ENCODE measurements at regions of chr6 and their contacts with region 1.

Region 1: DNA sequence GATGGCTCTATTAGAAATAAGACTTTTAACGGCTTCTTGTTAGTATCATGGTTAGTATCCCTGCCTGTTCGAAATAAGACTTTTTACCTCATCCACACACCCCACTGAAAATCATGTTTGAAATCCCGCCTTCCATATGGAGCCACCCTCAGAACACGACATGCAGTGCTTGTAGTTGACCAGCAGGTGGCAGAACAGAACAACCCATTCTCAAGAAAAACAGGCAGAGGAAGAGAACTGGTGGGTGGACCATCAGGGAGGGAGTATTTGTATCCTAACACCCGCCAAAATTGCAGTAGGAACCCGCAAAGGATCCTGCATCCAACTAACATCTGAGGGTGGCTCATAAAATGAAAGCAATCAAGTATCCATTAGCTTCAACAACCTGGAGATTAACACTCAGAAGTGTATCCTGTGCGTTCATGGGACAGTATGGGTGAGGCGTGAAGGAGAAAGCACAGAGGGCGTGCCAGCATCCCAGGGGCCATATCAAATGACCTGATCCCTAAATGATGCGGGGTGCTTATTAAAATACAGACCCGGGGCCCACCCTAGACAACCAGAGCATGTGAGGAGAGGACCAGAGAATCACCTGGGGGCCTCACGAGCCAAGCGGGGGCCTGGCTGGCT is 89.6 kb upstream of the NHSL1 start:
- DNase-seq: peak; percentile 69 to 71
- ATAC-seq: peak; percentile 45 to 68; a peak in 5 of 6 replicates
- H3K4me3 ChIP-seq: no peak overlapping the region
- H3K27ac ChIP-seq: 0 out of 6 replicates have a peak overlapping the region, but pooled peaks of 1 of the 2 experiments have one; percentile 12
- H3K4me1 ChIP-seq: peaks cover 18% of the 10 kb centered on the region
- CTCF ChIP-seq: peak; percentile 80
- EP300 ChIP-seq: no peak
- POLR2A ChIP-seq: no peak
- RAD21 ChIP-seq: peak; percentile 78

Region 2: DNA sequence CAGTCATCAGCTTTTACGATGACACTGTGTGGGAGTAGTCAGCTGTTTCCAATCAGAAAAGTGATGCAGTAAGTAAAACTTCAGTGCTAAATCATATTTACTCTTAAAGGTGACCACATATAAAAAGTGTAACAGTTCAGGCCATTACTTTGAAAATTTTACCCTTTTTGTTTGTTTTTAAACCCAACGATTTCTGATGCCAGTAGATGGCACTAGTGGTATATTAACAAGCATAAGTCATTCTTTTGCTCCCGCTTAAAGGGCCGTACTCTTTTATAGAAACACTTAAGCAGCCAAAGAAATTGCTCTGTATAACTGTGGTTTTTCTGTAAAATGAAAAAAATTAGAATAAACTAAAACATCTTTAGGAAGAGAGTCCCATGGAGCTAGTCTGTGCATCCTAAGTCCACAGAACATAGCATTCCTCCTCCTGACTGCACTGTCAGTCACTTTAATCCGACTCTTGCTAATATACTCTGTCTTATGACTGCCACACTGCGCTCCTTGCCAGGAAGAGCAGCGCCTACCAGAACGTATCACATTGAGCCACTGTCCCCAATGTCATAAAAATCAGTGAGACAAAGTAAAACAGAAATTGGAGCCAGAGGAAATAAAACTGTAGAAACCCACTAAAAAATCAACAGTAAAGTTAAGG is 159.8 kb before region 1 on chr6:
- CTCF ChIA-PET with region 1: interaction called, 19 read pairs
- POLR2A ChIA-PET with region 1: no interaction called
- DNase-seq: peak; percentile 25 to 54
- ATAC-seq: peak; percentile 73 to 78; a peak in 4 of 6 replicates
- H3K4me3 ChIP-seq: no peak overlapping the region
- H3K27ac ChIP-seq: peak overlapping the region; percentile 2 to 3; a peak in 1 of 6 replicates
- H3K4me1 ChIP-seq: no peaks in the 10 kb centered on the region
- CTCF ChIP-seq: peak; percentile 73
- EP300 ChIP-seq: no peak
- POLR2A ChIP-seq: no peak
- RAD21 ChIP-seq: peak; percentile 79 to 86

Region 3: GRCh38 chr6:138473144-138473543 is 115.8 kb before region 1 on chr6:
- CTCF ChIA-PET with region 1: no interaction called
- POLR2A ChIA-PET with region 1: no interaction called
- DNase-seq: no peak
- ATAC-seq: no peak
- H3K4me3 ChIP-seq: no peak overlapping the region
- H3K27ac ChIP-seq: no peak overlapping the region
- H3K4me1 ChIP-seq: peaks cover 14% of the 10 kb centered on the region
- CTCF ChIP-seq: no peak
- EP300 ChIP-seq: no peak
- POLR2A ChIP-seq: no peak
- RAD21 ChIP-seq: no peak

Region 4: DNA sequence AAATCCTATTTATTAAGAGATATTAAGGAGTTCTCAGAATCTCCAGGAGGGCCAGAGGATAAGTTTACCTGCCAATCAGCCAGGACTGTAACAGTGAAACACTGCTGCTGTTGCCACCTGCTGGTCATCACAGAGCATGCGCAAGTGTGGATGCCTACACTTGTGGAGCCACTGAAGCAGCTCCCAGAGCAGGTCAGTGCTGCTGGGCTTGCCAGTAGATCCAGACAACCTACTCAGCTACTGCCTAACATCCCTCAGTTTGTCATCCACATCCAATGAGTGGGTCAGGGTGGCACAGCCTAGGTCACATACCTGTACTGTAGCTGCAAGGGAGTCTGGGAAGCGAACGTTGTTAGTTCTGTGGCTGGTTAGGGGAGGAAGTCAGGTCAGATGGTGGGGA is 71.3 kb before region 1 on chr6:
- CTCF ChIA-PET with region 1: no interaction called
- POLR2A ChIA-PET with region 1: no interaction called
- DNase-seq: peak in 1 of 2 experiments; percentile 28
- ATAC-seq: peak in 1 of 2 experiments; percentile 62; a peak in 2 of 6 replicates
- H3K4me3 ChIP-seq: no peak overlapping the region
- H3K27ac ChIP-seq: no peak overlapping the region
- H3K4me1 ChIP-seq: no peaks in the 10 kb centered on the region
- CTCF ChIP-seq: peak; percentile 15; the same call in 1 of the 3 replicates
- EP300 ChIP-seq: no peak
- POLR2A ChIP-seq: no peak
- RAD21 ChIP-seq: no peak

Region 5: DNA sequence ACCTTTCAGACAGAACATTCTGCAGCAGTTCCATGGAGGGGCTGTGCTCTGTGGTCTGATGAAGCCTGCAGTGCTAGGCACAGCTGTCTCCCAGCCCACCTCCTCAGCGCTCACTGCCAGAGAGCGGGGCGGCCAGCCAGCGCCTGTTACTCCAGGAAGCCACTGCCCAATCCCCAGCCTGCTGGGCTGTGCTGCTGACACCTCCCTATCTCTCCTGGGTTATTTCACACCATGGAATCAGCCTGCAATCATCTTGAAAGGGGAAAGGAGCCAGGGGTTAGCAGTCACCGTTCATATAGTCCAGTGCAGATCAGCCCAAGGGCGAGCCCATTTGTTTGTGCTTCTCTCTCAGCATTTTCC is 43.3 kb before region 1 on chr6:
- CTCF ChIA-PET with region 1: no interaction called
- POLR2A ChIA-PET with region 1: no interaction called
- DNase-seq: no peak
- ATAC-seq: no peak
- H3K4me3 ChIP-seq: no peak overlapping the region
- H3K27ac ChIP-seq: peak overlapping the region in 1 of 2 experiments; percentile 56; a peak in 2 of 6 replicates
- H3K4me1 ChIP-seq: peaks cover 37% of the 10 kb centered on the region
- CTCF ChIP-seq: no peak
- EP300 ChIP-seq: no peak
- POLR2A ChIP-seq: no peak
- RAD21 ChIP-seq: no peak

Region 6: DNA sequence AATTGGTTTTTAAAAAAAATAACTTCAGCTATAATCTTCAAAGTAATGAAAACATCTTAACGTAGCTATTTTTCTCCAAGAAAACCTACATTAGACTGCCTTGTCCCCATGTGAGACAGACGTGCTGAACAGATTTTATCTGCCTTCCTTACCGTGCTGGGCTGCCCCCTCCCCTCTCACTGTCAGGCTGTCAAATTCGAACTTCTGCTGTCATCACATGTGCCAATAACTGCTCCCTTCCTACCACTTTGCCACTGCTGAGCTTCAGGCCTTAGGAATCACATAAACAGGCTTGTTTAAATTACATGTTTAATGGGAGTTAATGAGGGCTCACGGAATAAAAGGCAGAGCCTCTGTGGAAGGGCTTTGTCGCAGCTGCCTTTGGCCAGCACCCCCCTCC is 12.6 kb before region 1 on chr6:
- CTCF ChIA-PET with region 1: interaction called, 18 read pairs
- POLR2A ChIA-PET with region 1: no interaction called
- DNase-seq: no peak
- ATAC-seq: no peak
- H3K4me3 ChIP-seq: no peak overlapping the region
- H3K27ac ChIP-seq: no peak overlapping the region
- H3K4me1 ChIP-seq: no peaks in the 10 kb centered on the region
- CTCF ChIP-seq: no peak
- EP300 ChIP-seq: no peak
- POLR2A ChIP-seq: no peak
- RAD21 ChIP-seq: no peak

Region 7: GRCh38 chr6:138765896-138766655 is 177.2 kb after region 1 on chr6:
- CTCF ChIA-PET with region 1: interaction called, 65 read pairs
- POLR2A ChIA-PET with region 1: no interaction called
- DNase-seq: peak; percentile 28 to 31
- ATAC-seq: no peak
- H3K4me3 ChIP-seq: no peak overlapping the region
- H3K27ac ChIP-seq: no peak overlapping the region
- H3K4me1 ChIP-seq: no peaks in the 10 kb centered on the region
- CTCF ChIP-seq: peak; percentile 66
- EP300 ChIP-seq: no peak
- POLR2A ChIP-seq: no peak
- RAD21 ChIP-seq: peak; percentile 70 to 78

Measured in A549 (cell line).